Activated CD4-positive, alpha-beta T cell treated with anti-CD3 and anti-CD28 coated beads for 36 hours (primary cell): ENCODE measurements at regions of chr16 and their contacts with region 1.

Region 1: GRCh38 chr16:11621920-11622651 is 35.4 kb upstream of the LITAF start:
- DNase-seq: peak; percentile 53
- ATAC-seq: peak; percentile 68
- H3K4me3 Mint-ChIP-seq: peak overlapping the region; percentile 63
- H3K27ac Mint-ChIP-seq: peak overlapping the region; percentile 84
- H3K4me1 Mint-ChIP-seq: peaks cover 55% of the 10 kb centered on the region
- H3K27me3 Mint-ChIP-seq: no peaks in the 10 kb centered on the region

Region 2: GRCh38 chr16:11611871-11612664 is 10.0 kb before region 1 on chr16:
- CTCF ChIA-PET with region 1: no interaction called
- POLR2A ChIA-PET with region 1: interaction called, 3 read pairs
- intact Hi-C with region 1: loop called in 1 of 2 experiments (anchors 2 kb)
- DNase-seq: no peak
- ATAC-seq: no peak
- H3K4me3 Mint-ChIP-seq: no peak overlapping the region
- H3K27ac Mint-ChIP-seq: no peak overlapping the region
- H3K4me1 Mint-ChIP-seq: peaks cover 19% of the 10 kb centered on the region
- H3K27me3 Mint-ChIP-seq: no peaks in the 10 kb centered on the region